Activated CD8-positive, alpha-beta T cell treated with anti-CD3 and anti-CD28 coated beads for 36 hours (primary cell): ENCODE measurements at regions of chr12 and their contacts with region 1.

Region 1: GRCh38 chr12:14394317-14395073 is 29.0 kb downstream of the ATF7IP start:
- DNase-seq: peak; percentile 66
- ATAC-seq: peak; percentile 75
- H3K4me3 Mint-ChIP-seq: peak overlapping the region; percentile 85
- H3K27ac Mint-ChIP-seq: peak overlapping the region; percentile 99
- H3K4me1 Mint-ChIP-seq: peaks cover 78% of the 10 kb centered on the region
- H3K27me3 Mint-ChIP-seq: no peaks in the 10 kb centered on the region
- CTCF ChIP-seq: no peak

Region 2: GRCh38 chr12:14257734-14258574 is 136.5 kb before region 1 on chr12:
- CTCF ChIA-PET with region 1: interaction called, 5 read pairs
- POLR2A ChIA-PET with region 1: interaction called, 11 read pairs
- intact Hi-C with region 1: no loop called
- DNase-seq: peak; percentile 95
- ATAC-seq: peak; percentile 78
- H3K4me3 Mint-ChIP-seq: peak overlapping the region; percentile 52
- H3K27ac Mint-ChIP-seq: peak overlapping the region; percentile 92
- H3K4me1 Mint-ChIP-seq: peaks cover 46% of the 10 kb centered on the region
- H3K27me3 Mint-ChIP-seq: no peaks in the 10 kb centered on the region
- CTCF ChIP-seq: no peak

Region 3: GRCh38 chr12:14365294-14366208 is 28.9 kb before region 1 on chr12 and contains the start of gene ATF7IP:
- CTCF ChIA-PET with region 1: interaction called, 26 read pairs
- POLR2A ChIA-PET with region 1: interaction called, 55 read pairs
- intact Hi-C with region 1: loop called (anchors 2 kb)
- DNase-seq: peak; percentile 98
- ATAC-seq: peak; percentile 88
- H3K4me3 Mint-ChIP-seq: peak within 1 kb of the TSS; percentile 75
- H3K27ac Mint-ChIP-seq: peak within 1 kb of the TSS; percentile 97
- H3K4me1 Mint-ChIP-seq: peaks cover 31% of the 10 kb centered on the region
- H3K27me3 Mint-ChIP-seq: no peaks in the 10 kb centered on the region
- CTCF ChIP-seq: peak; percentile 32
- total RNA-seq, gene ATF7IP: 101 to 107 TPM

Region 4: GRCh38 chr12:14769969-14770495 is 375.5 kb after region 1 on chr12:
- CTCF ChIA-PET with region 1: no interaction called
- POLR2A ChIA-PET with region 1: interaction called, 4 read pairs
- intact Hi-C with region 1: loop called (anchors 5 kb)
- DNase-seq: peak; percentile 94
- ATAC-seq: peak; percentile 54
- H3K4me3 Mint-ChIP-seq: peak overlapping the region; percentile 95
- H3K27ac Mint-ChIP-seq: peak overlapping the region; percentile 99
- H3K4me1 Mint-ChIP-seq: peaks cover 33% of the 10 kb centered on the region
- H3K27me3 Mint-ChIP-seq: no peaks in the 10 kb centered on the region
- CTCF ChIP-seq: peak; percentile 66

Region 5: DNA sequence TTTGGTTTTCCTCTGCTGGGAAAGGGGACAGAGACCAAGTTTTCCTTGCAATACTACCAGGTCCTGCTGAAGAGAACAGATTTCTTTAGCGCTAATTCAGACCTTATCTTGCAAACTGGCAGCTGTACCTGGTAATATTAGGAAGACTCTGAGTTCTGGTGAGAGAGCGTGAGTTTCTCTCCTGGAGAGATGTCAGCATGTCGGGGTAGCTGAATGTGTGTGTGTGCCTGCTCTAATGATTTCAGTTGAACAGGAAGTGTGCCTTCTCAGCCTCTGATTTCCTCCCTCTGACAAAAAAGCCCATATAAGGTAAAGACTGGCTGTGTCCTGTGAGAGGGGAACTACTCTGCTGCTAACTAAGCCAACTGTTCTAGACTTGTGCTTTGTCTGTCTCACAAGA is 554.2 kb after region 1 on chr12:
- CTCF ChIA-PET with region 1: no interaction called
- POLR2A ChIA-PET with region 1: no interaction called
- intact Hi-C with region 1: loop called (anchors 10 kb)
- DNase-seq: peak; percentile 73
- ATAC-seq: peak; percentile 77
- H3K4me3 Mint-ChIP-seq: peak overlapping the region; percentile 68
- H3K27ac Mint-ChIP-seq: peak overlapping the region; percentile 97
- H3K4me1 Mint-ChIP-seq: peaks cover 84% of the 10 kb centered on the region
- H3K27me3 Mint-ChIP-seq: no peaks in the 10 kb centered on the region
- CTCF ChIP-seq: no peak